PC-3 (cell line): ENCODE measurements at regions of chr20 and their contacts with region 1.

Region 1: GRCh38 chr20:47438577-47439381 is 62.9 kb upstream of the NCOA3 start:
- DNase-seq: peak; percentile 80
- ATAC-seq: no peak; the same call in 1 of the 2 replicates
- H3K4me3 ChIP-seq: no peak overlapping the region
- H3K27ac ChIP-seq: peak overlapping the region; percentile 55
- H3K4me1 ChIP-seq: peaks cover 20% of the 10 kb centered on the region
- H3K27me3 ChIP-seq: no peaks in the 10 kb centered on the region
- CTCF ChIP-seq: no peak

Region 2: DNA sequence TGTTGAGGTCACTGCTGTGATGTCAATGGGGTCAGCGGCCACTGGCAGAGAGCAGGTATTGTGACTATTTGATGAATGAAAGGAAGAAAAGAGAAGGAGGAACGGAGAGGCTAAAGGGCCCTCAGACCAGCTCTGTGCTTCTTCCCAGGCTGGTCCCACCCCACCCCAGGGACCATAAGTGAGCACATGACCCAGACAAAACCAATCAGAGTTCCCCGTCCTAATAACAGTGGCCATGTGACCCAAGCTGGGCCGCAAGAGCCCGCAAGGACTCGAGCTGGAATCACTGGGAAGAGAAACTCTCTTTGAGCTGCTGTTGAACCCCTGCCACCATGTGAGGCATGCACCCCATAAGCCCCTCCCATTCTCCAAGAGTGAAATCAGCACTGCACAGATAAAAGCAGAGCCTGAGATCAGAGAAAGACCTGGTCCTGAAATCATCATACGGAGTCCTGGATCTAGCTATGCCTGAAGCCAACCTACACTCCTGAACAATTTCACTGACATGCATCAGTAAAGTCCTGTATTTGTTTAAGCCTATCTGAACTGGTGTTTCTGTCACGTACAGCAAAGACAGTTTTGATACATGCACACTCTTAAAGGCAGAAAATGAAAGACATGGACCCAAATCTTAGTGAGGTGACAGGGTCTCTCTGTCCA is 1298.8 kb after region 1 on chr20:
- CTCF ChIA-PET with region 1: no interaction called
- POLR2A ChIA-PET with region 1: interaction called, 22 read pairs
- intact Hi-C with region 1: no loop called
- DNase-seq: no peak
- ATAC-seq: no peak
- H3K4me3 ChIP-seq: no peak overlapping the region
- H3K27ac ChIP-seq: no peak overlapping the region
- H3K4me1 ChIP-seq: no peaks in the 10 kb centered on the region
- H3K27me3 ChIP-seq: no peaks in the 10 kb centered on the region
- CTCF ChIP-seq: no peak